ENCODE measurements at regions of chr6 and their contacts with region 1.

Region 1: GRCh38 chr6:30500421-30501355 is 11.4 kb downstream of the HLA-E start:
- DNase-seq: no peak
- ATAC-seq: peak; percentile 61
- H3K4me3 Mint-ChIP-seq: peak overlapping the region; percentile 74
- H3K27ac Mint-ChIP-seq: peak overlapping the region; percentile 79
- H3K4me1 Mint-ChIP-seq: peaks cover 49% of the 10 kb centered on the region
- H3K27me3 Mint-ChIP-seq: no peaks in the 10 kb centered on the region
- CTCF ChIP-seq: no peak

Region 2: GRCh38 chr6:30424549-30424948 is 76.1 kb before region 1 on chr6:
- CTCF ChIA-PET with region 1: no interaction called
- POLR2A ChIA-PET with region 1: no interaction called
- intact Hi-C with region 1: no loop called
- DNase-seq: no peak
- ATAC-seq: no peak
- H3K4me3 Mint-ChIP-seq: no peak overlapping the region
- H3K27ac Mint-ChIP-seq: no peak overlapping the region
- H3K4me1 Mint-ChIP-seq: no peaks in the 10 kb centered on the region
- H3K27me3 Mint-ChIP-seq: peaks cover 56% of the 10 kb centered on the region
- CTCF ChIP-seq: no peak

Region 3: GRCh38 chr6:30515932-30516753 is 15.5 kb after region 1 on chr6:
- CTCF ChIA-PET with region 1: interaction called, 5 read pairs
- POLR2A ChIA-PET with region 1: interaction called, 460 read pairs
- intact Hi-C with region 1: no loop called
- DNase-seq: peak; percentile 69
- ATAC-seq: peak; percentile 82
- H3K4me3 Mint-ChIP-seq: peak overlapping the region; percentile 87
- H3K27ac Mint-ChIP-seq: peak overlapping the region; percentile 97
- H3K4me1 Mint-ChIP-seq: peaks cover 71% of the 10 kb centered on the region
- H3K27me3 Mint-ChIP-seq: no peaks in the 10 kb centered on the region
- CTCF ChIP-seq: no peak

Measured in activated B cell treated with CpG ODN at 0.5 μM for 24 hours (primary cell).